ENCODE measurements at regions of chr6 and their contacts with region 1.

Region 1: DNA sequence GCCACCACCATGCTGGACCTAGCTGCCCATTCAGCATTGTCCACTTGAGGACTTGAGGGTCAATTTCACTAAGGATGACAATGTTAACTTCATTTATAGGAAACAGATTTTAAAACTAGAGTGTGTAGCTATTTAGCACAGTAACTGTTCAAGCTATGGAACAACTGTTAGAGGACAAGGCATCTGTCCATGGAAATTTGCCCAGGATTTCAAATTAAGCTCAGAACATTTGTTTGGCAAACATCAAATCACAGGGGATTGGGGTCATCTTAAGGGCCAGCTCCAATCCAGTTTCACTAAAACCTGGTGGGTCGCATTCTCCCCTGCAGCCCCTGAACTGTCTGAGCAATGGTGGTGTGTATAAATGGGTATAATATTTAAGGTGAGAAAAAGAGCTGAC is 35.1 kb downstream of the PM20D2 start:
- DNase-seq: no peak
- H3K4me3 ChIP-seq: no peak overlapping the region
- H3K27ac ChIP-seq: no peak overlapping the region
- H3K4me1 ChIP-seq: no peaks in the 10 kb centered on the region
- H3K27me3 ChIP-seq: no peaks in the 10 kb centered on the region
- CTCF ChIP-seq: no peak
- EP300 ChIP-seq: no peak
- POLR2A ChIP-seq: no peak

Region 2: GRCh38 chr6:89221971-89222711 is 41.2 kb after region 1 on chr6:
- intact Hi-C with region 1: loop called (anchors 5 kb)
- DNase-seq: no peak
- H3K4me3 ChIP-seq: no peak overlapping the region
- H3K27ac ChIP-seq: peak overlapping the region in 2 of 4 donors; percentile 34 to 60
- H3K4me1 ChIP-seq: peaks cover 0 to 18% (median 12%) of the 10 kb centered on the region in 4 donors
- H3K27me3 ChIP-seq: no peaks in the 10 kb centered on the region
- CTCF ChIP-seq: no peak
- EP300 ChIP-seq: no peak
- POLR2A ChIP-seq: no peak

Region 3: GRCh38 chr6:89610149-89610642 is 429.2 kb after region 1 on chr6:
- intact Hi-C with region 1: no loop called
- DNase-seq: peak; percentile 79
- H3K4me3 ChIP-seq: no peak overlapping the region
- H3K27ac ChIP-seq: no peak overlapping the region
- H3K4me1 ChIP-seq: no peaks in the 10 kb centered on the region
- H3K27me3 ChIP-seq: no peaks in the 10 kb centered on the region
- CTCF ChIP-seq: peak; percentile 58 to 86 (median 64)
- EP300 ChIP-seq: no peak
- POLR2A ChIP-seq: no peak